Esophagus muscularis mucosa (tissue), 4 donors: ENCODE measurements at regions of chr17 and their contacts with region 1.

Region 1: DNA sequence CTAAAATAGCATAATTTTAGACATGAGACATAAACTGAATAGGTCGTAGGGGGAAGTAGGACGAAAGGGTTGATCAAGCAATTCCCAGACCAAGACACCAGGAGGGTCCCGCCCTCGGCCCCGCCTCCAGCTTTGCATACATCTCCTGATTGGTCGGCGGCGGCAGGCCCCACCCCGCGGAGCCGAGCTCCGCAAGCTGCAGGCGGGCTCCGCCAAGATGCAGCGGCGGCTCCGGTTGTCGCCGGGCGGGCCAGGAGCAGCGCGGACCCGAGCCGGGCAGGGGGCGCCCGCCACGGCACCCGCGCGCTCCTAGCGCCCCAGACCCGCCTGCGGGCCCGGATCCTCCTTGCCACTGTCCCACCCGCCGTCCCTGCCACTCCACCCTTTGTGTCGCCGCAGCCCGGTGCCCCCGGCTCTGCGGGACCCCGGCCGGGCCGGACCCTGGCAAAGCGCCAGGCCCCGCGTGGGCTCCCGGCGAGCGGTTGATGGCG is at the start of gene CDR2L:
- DNase-seq: peak; percentile 99
- H3K4me3 ChIP-seq: peak within 1 kb of the TSS; percentile 73 to 94 (median 90)
- H3K27ac ChIP-seq: peak within 1 kb of the TSS; percentile 92 to 98 (median 96)
- H3K4me1 ChIP-seq: peaks cover 33 to 47% (median 37%) of the 10 kb centered on the region in 4 donors
- H3K27me3 ChIP-seq: no peaks in the 10 kb centered on the region
- CTCF ChIP-seq: no peak
- EP300 ChIP-seq: no peak
- POLR2A ChIP-seq: peak; percentile 67
- total RNA-seq, gene CDR2L: 14.6 to 36.7 (median 24.3) TPM

Region 2: GRCh38 chr17:75012346-75013091 is 25.1 kb after region 1 on chr17 and contains the start of gene MRPL58:
- intact Hi-C with region 1: loop called (anchors 2 kb)
- DNase-seq: peak; percentile 96
- H3K4me3 ChIP-seq: peak within 1 kb of the TSS; percentile 66 to 93 (median 78)
- H3K27ac ChIP-seq: peak within 1 kb of the TSS; percentile 90 to 95 (median 92)
- H3K4me1 ChIP-seq: peaks cover 18 to 35% (median 30%) of the 10 kb centered on the region in 4 donors
- H3K27me3 ChIP-seq: no peaks in the 10 kb centered on the region
- CTCF ChIP-seq: peak; percentile 28 to 67 (median 43)
- EP300 ChIP-seq: no peak
- POLR2A ChIP-seq: no peak
- total RNA-seq, gene MRPL58: 34.9 to 47.8 (median 40.2) TPM

Region 3: DNA sequence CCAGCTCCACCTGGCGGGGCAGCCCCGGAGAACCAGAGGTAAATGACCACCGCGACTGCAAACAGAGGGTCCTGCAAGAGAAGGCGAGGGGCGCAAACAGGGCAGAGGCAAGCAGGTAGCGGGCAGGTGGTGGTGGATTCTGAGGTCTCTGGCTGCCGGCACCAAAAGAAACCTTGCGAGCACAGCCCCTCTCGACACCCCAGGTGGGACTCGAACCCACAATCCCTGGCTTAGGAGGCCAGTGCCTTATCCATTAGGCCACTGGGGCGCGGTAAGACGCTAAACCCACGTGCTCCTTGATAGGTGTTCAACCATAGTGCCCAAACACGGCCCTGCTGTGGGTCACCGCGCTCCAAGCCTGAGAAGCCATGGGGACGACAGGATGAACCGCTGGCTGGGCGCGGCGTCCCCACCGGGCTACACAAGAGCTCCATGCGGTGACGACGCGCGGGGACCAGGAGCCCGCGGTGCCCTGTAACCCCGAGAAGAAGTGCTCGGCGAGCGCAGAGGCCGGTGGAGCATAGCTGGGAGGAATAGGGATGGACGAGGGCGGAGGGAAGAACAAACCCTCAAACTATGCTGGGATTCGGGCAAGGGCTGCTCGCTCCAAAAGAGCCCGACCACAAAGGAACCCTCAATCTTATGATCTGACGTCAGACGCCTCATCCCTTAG is 46.9 kb after region 1 on chr17:
- intact Hi-C with region 1: loop called (anchors 5 kb)
- DNase-seq: peak; percentile 98
- H3K4me3 ChIP-seq: peak overlapping the region; percentile 67 to 88 (median 76)
- H3K27ac ChIP-seq: peak overlapping the region; percentile 92 to 98 (median 96)
- H3K4me1 ChIP-seq: peaks cover 37 to 52% (median 50%) of the 10 kb centered on the region in 4 donors
- H3K27me3 ChIP-seq: no peaks in the 10 kb centered on the region
- CTCF ChIP-seq: no peak
- EP300 ChIP-seq: no peak
- POLR2A ChIP-seq: peak; percentile 14